ENCODE measurements at regions of chr9 and their contacts with region 1.

Region 1: DNA sequence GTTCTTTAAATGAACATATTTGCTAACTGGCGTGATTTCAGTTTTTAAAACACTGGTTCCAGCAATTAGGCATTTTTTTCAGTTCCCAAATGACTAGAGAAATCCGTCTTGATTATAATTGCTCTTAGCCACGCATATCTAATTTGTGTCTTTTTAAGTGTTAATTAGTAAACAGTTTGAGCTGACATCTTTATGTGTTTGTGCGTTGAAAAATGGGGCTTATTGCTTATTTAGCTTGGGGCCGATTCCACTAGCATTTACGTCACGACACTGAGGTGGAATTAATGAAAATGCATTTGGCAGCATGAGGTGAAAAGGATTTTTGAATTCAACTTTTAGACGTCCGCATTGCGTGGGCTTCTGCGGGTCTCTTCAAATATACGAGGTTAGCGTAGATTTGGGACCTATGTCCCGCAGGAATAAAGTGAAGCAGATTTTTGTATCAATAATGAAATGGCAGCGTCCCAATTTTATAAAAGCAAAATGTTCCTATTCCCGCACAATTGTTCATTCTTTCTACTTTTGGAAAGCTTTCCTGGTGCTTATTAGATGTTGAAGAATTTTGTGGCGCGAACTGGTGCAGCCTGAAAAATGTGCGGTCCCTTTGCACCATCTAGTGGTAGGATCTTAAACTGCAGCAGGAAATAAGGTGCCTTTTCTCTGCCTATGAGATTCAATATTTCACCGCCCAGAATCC is 122.7 kb upstream of the LMX1B start:
- DNase-seq: peak; percentile 79
- ATAC-seq: peak; percentile 77
- H3K4me3 ChIP-seq: no peak overlapping the region
- H3K4me3 Mint-ChIP-seq: no peak overlapping the region
- H3K27ac ChIP-seq: no peak overlapping the region
- H3K27ac Mint-ChIP-seq: no peak overlapping the region
- H3K4me1 ChIP-seq: peaks cover 11 to 14% of the 10 kb centered on the region in 2 donors
- H3K4me1 Mint-ChIP-seq: peaks cover 2% of the 10 kb centered on the region
- H3K27me3 ChIP-seq: peaks cover 0 to 7% (median 2%) of the 10 kb centered on the region in 4 experiments
- H3K27me3 Mint-ChIP-seq: peaks cover 3% of the 10 kb centered on the region
- CTCF ChIP-seq: peak; percentile 99

Region 2: GRCh38 chr9:125558453-125559092 is 932.4 kb before region 1 on chr9:
- CTCF ChIA-PET with region 1: interaction called, 8 read pairs
- POLR2A ChIA-PET with region 1: no interaction called
- intact Hi-C with region 1: loop called (anchors 10 kb)
- DNase-seq: peak; percentile 80
- ATAC-seq: peak; percentile 81
- H3K4me3 ChIP-seq: no peak overlapping the region
- H3K4me3 Mint-ChIP-seq: no peak overlapping the region
- H3K27ac ChIP-seq: no peak overlapping the region
- H3K27ac Mint-ChIP-seq: peak overlapping the region; percentile 32
- H3K4me1 ChIP-seq: peaks cover 18 to 30% of the 10 kb centered on the region in 2 donors
- H3K4me1 Mint-ChIP-seq: peaks cover 22% of the 10 kb centered on the region
- H3K27me3 ChIP-seq: no peaks in the 10 kb centered on the region
- H3K27me3 Mint-ChIP-seq: no peaks in the 10 kb centered on the region
- CTCF ChIP-seq: peak; percentile 90

Region 3: GRCh38 chr9:126043681-126044080 is 447.3 kb before region 1 on chr9:
- CTCF ChIA-PET with region 1: no interaction called
- POLR2A ChIA-PET with region 1: no interaction called
- intact Hi-C with region 1: no loop called
- DNase-seq: no peak
- ATAC-seq: no peak
- H3K4me3 ChIP-seq: no peak overlapping the region
- H3K4me3 Mint-ChIP-seq: no peak overlapping the region
- H3K27ac ChIP-seq: no peak overlapping the region
- H3K27ac Mint-ChIP-seq: no peak overlapping the region
- H3K4me1 ChIP-seq: no peaks in the 10 kb centered on the region
- H3K4me1 Mint-ChIP-seq: no peaks in the 10 kb centered on the region
- H3K27me3 ChIP-seq: peaks cover 0 to 6% (median 0%) of the 10 kb centered on the region in 4 experiments
- H3K27me3 Mint-ChIP-seq: peaks cover 39% of the 10 kb centered on the region
- CTCF ChIP-seq: no peak

Region 4: GRCh38 chr9:126228781-126229444 is 262.1 kb before region 1 on chr9:
- CTCF ChIA-PET with region 1: interaction called, 10 read pairs
- POLR2A ChIA-PET with region 1: no interaction called
- intact Hi-C with region 1: loop called (anchors 1 kb)
- DNase-seq: peak; percentile 79
- ATAC-seq: peak; percentile 98
- H3K4me3 ChIP-seq: no peak overlapping the region
- H3K4me3 Mint-ChIP-seq: no peak overlapping the region
- H3K27ac ChIP-seq: no peak overlapping the region
- H3K27ac Mint-ChIP-seq: no peak overlapping the region
- H3K4me1 ChIP-seq: peaks cover 0 to 3% of the 10 kb centered on the region in 2 donors
- H3K4me1 Mint-ChIP-seq: peaks cover 6% of the 10 kb centered on the region
- H3K27me3 ChIP-seq: peaks cover 0 to 25% (median 0%) of the 10 kb centered on the region in 4 experiments
- H3K27me3 Mint-ChIP-seq: peaks cover 40% of the 10 kb centered on the region
- CTCF ChIP-seq: peak; percentile 89

Region 5: GRCh38 chr9:126317513-126317912 is 173.5 kb before region 1 on chr9:
- CTCF ChIA-PET with region 1: interaction called, 85 read pairs
- POLR2A ChIA-PET with region 1: no interaction called
- intact Hi-C with region 1: loop called (anchors 1 kb)
- DNase-seq: peak; percentile 35
- ATAC-seq: no peak
- H3K4me3 ChIP-seq: no peak overlapping the region
- H3K4me3 Mint-ChIP-seq: no peak overlapping the region
- H3K27ac ChIP-seq: no peak overlapping the region
- H3K27ac Mint-ChIP-seq: no peak overlapping the region
- H3K4me1 ChIP-seq: no peaks in the 10 kb centered on the region
- H3K4me1 Mint-ChIP-seq: peaks cover 2% of the 10 kb centered on the region
- H3K27me3 ChIP-seq: peaks cover 0 to 4% (median 0%) of the 10 kb centered on the region in 4 experiments
- H3K27me3 Mint-ChIP-seq: peaks cover 23% of the 10 kb centered on the region
- CTCF ChIP-seq: peak; percentile 23

Region 6: DNA sequence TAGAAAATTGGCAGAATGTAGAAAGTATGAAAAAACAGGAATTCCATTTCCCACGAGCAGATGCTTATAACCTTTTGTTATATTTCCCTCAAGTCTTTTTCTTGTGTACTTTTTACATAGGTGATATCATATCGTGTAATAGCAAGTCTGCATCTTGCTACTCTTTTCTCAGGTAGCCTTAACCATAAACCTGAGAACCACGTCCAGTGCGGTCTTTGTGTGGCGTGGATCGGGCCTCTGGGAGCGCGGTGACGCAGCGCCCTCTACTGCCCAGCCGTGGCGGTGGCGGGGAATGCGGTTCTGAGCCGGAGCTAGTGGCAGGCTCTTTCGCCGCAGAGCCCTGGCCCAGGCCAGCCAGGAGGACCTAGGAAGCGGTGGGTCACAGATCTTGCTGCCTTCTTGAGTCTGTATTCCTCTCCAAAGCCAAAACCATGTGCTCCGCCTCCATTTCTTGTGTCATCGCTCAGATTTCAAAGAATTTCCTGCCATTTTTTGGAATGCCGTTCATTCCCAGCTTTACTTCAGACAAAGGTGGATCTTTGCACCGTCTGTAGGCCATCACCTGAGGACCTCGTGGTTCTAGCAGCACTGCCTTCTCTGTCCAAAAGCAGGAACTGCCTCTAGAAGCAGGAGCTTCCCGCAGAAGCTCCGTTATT is 92.5 kb before region 1 on chr9:
- CTCF ChIA-PET with region 1: interaction called, 69 read pairs
- POLR2A ChIA-PET with region 1: no interaction called
- intact Hi-C with region 1: loop called (anchors 2 kb)
- DNase-seq: peak; percentile 78
- ATAC-seq: peak; percentile 51
- H3K4me3 ChIP-seq: no peak overlapping the region
- H3K4me3 Mint-ChIP-seq: peak overlapping the region; percentile 26
- H3K27ac ChIP-seq: no peak overlapping the region
- H3K27ac Mint-ChIP-seq: no peak overlapping the region
- H3K4me1 ChIP-seq: peaks cover 13 to 16% of the 10 kb centered on the region in 2 donors
- H3K4me1 Mint-ChIP-seq: peaks cover 27% of the 10 kb centered on the region
- H3K27me3 ChIP-seq: no peaks in the 10 kb centered on the region
- H3K27me3 Mint-ChIP-seq: no peaks in the 10 kb centered on the region
- CTCF ChIP-seq: peak; percentile 96

Region 7: GRCh38 chr9:126471084-126471624 is 19.9 kb before region 1 on chr9:
- CTCF ChIA-PET with region 1: interaction called, 73 read pairs
- POLR2A ChIA-PET with region 1: interaction called, 9 read pairs
- intact Hi-C with region 1: loop called (anchors 1 kb)
- DNase-seq: peak; percentile 84
- ATAC-seq: peak; percentile 83
- H3K4me3 ChIP-seq: peak overlapping the region in 4 of 5 experiments; percentile 11 to 60 (median 30)
- H3K4me3 Mint-ChIP-seq: peak overlapping the region; percentile 76
- H3K27ac ChIP-seq: peak overlapping the region; percentile 62 to 83
- H3K27ac Mint-ChIP-seq: peak overlapping the region; percentile 90
- H3K4me1 ChIP-seq: peaks cover 46 to 49% of the 10 kb centered on the region in 2 donors
- H3K4me1 Mint-ChIP-seq: peaks cover 56% of the 10 kb centered on the region
- H3K27me3 ChIP-seq: no peaks in the 10 kb centered on the region
- H3K27me3 Mint-ChIP-seq: no peaks in the 10 kb centered on the region
- CTCF ChIP-seq: no peak